H1 (cell line): ENCODE measurements at regions of chrX and their contacts with region 1.

Region 1: DNA sequence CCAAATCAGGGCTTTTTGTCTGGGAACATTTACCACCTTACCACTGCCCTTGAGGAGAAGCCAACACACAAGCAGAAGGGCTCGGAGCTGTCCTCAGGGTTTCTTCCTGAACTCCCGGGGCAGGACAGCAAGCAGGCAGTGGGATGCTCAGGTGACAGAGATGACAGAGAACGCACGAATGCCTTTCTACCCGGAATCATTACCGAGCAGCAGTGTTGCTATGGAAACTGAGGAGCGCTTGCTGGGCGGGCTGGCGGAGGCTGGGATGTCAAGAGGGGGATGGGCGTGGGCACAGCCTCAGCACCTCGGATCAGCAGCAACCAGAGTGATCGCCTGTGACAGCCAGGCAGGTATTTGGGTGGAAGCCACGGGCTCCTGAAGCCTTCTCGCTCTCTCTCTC is 17.8 kb downstream of the SSR4 start:
- DNase-seq: no peak
- H3K4me3 ChIP-seq: no peak overlapping the region
- H3K27ac ChIP-seq: no peak overlapping the region
- H3K4me1 ChIP-seq: peaks cover 0 to 17% (median 7%) of the 10 kb centered on the region in 4 experiments; a peak in 4 of 7 replicates
- H3K27me3 ChIP-seq: no peaks in the 10 kb centered on the region
- CTCF ChIP-seq: no peak
- EP300 ChIP-seq: no peak
- POLR2A ChIP-seq: no peak
- RAD21 ChIP-seq: no peak

Region 2: GRCh38 chrX:153800177-153800722 is 12.0 kb before region 1 on chrX:
- CTCF ChIA-PET with region 1: interaction called, 3 read pairs
- POLR2A ChIA-PET with region 1: interaction called, 22 read pairs
- DNase-seq: no peak
- H3K4me3 ChIP-seq: no peak overlapping the region
- H3K27ac ChIP-seq: no peak overlapping the region
- H3K4me1 ChIP-seq: peaks cover 0 to 12% (median 4%) of the 10 kb centered on the region in 4 experiments; a peak in 4 of 7 replicates
- H3K27me3 ChIP-seq: no peaks in the 10 kb centered on the region
- CTCF ChIP-seq: no peak
- EP300 ChIP-seq: no peak
- POLR2A ChIP-seq: peak in 1 of 2 experiments; percentile 50; a peak in 1 of 3 replicates
- RAD21 ChIP-seq: no peak

Region 3: DNA sequence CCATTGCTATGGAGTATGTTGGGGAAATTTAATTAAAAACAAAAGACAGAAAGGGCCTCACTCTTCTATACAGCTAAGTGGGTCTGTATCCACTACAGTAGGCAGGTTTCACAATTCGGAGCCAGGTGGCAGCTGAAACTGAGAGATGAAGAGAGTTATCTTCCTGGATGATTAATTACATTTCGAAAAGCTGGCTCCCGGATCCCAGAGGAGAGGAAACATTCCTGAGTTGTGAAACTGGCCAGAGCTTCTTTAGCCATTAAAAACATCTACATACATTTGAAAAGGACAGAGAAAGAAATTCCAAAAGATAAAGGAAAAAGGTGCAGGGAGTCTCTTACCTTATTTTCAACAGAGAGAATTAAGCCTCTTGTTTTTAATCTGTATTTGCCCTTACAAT is 33.6 kb after region 1 on chrX:
- CTCF ChIA-PET with region 1: no interaction called
- POLR2A ChIA-PET with region 1: interaction called, 10 read pairs
- DNase-seq: no peak
- H3K4me3 ChIP-seq: peak overlapping the region in 1 of 4 experiments; percentile 45; a peak in 2 of 8 replicates
- H3K27ac ChIP-seq: no peak overlapping the region
- H3K4me1 ChIP-seq: peaks cover 0 to 12% (median 3%) of the 10 kb centered on the region in 4 experiments; a peak in 5 of 7 replicates
- H3K27me3 ChIP-seq: no peaks in the 10 kb centered on the region
- CTCF ChIP-seq: no peak
- EP300 ChIP-seq: no peak
- POLR2A ChIP-seq: no peak
- RAD21 ChIP-seq: no peak